A549 (cell line): ENCODE measurements at regions of chr17 and their contacts with region 1.

Region 1: GRCh38 chr17:4074831-4075495 is 67.9 kb downstream of the ZZEF1 start:
- DNase-seq: peak; percentile 56 to 66
- ATAC-seq: peak; percentile 86 to 89
- H3K4me3 ChIP-seq: no peak overlapping the region
- H3K27ac ChIP-seq: no peak overlapping the region
- H3K4me1 ChIP-seq: no peaks in the 10 kb centered on the region
- CTCF ChIP-seq: peak; percentile 69
- EP300 ChIP-seq: no peak
- POLR2A ChIP-seq: no peak
- RAD21 ChIP-seq: peak; percentile 66 to 75

Region 2: DNA sequence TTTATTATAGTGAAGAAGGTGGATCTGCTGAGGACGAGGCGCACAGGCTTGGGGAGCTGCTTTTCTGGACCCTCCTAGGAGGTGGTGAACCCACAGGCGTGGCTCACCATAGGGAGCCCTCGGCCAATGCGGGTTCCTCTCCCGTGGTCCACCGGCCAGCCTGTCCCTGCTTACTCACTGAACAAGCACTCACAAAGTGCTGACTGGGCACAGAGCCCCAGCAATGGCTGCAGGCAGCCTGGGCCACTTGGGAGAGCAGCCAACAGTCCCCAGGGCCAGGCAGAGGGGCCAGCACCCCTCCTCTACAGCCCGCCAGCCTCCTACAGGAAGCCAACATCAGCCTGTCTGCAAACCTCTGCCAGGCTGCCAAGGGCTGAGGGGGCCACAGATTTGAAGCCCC is 209.8 kb before region 1 on chr17:
- CTCF ChIA-PET with region 1: interaction called, 10 read pairs
- POLR2A ChIA-PET with region 1: no interaction called
- DNase-seq: no peak
- ATAC-seq: peak; percentile 42 to 57
- H3K4me3 ChIP-seq: no peak overlapping the region
- H3K27ac ChIP-seq: peak overlapping the region in 1 of 2 experiments; percentile 36; a peak in 3 of 6 replicates
- H3K4me1 ChIP-seq: peaks cover 9% of the 10 kb centered on the region; the same call in 2 of the 3 replicates
- CTCF ChIP-seq: no peak
- EP300 ChIP-seq: no peak
- POLR2A ChIP-seq: no peak
- RAD21 ChIP-seq: no peak

Region 3: GRCh38 chr17:3935140-3935542 is 139.8 kb before region 1 on chr17:
- CTCF ChIA-PET with region 1: interaction called, 36 read pairs
- POLR2A ChIA-PET with region 1: no interaction called
- DNase-seq: peak; percentile 84 to 87
- ATAC-seq: peak; percentile 96 to 98
- H3K4me3 ChIP-seq: no peak overlapping the region
- H3K27ac ChIP-seq: no peak overlapping the region
- H3K4me1 ChIP-seq: no peaks in the 10 kb centered on the region; the same call in 2 of the 3 replicates
- CTCF ChIP-seq: peak; percentile 70
- EP300 ChIP-seq: no peak
- POLR2A ChIP-seq: no peak
- RAD21 ChIP-seq: peak; percentile 79 to 90

Region 4: GRCh38 chr17:4043862-4044261 is 31.1 kb before region 1 on chr17:
- CTCF ChIA-PET with region 1: interaction called, 27 read pairs
- POLR2A ChIA-PET with region 1: no interaction called
- DNase-seq: no peak
- ATAC-seq: no peak
- H3K4me3 ChIP-seq: no peak overlapping the region
- H3K27ac ChIP-seq: no peak overlapping the region
- H3K4me1 ChIP-seq: no peaks in the 10 kb centered on the region
- CTCF ChIP-seq: no peak
- EP300 ChIP-seq: no peak
- POLR2A ChIP-seq: no peak
- RAD21 ChIP-seq: no peak

Region 5: DNA sequence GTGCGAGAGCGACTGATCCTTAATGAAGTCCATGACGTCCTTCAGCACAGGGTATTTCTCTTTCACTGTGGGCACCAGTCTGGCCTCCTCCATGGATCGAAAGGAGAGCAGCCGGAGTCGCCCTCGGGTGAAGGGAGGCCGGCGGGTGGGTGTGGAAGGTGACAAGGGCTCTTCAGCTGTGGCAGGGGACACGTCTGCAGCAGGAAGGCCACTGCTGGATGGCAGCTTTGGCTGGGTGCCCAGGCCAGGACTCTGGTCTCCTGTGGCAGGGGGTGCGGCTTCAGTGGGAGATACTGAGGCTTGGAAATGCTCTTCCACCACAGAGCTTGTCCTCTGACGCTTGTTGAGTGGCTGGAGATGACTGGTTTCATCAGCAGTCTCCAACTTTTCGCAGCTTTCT is 10.6 kb before region 1 on chr17:
- CTCF ChIA-PET with region 1: interaction called, 24 read pairs
- POLR2A ChIA-PET with region 1: no interaction called
- DNase-seq: no peak
- ATAC-seq: no peak
- H3K4me3 ChIP-seq: no peak overlapping the region
- H3K27ac ChIP-seq: no peak overlapping the region
- H3K4me1 ChIP-seq: no peaks in the 10 kb centered on the region
- CTCF ChIP-seq: no peak
- EP300 ChIP-seq: no peak
- POLR2A ChIP-seq: no peak
- RAD21 ChIP-seq: no peak

Region 6: GRCh38 chr17:4086041-4086483 is 11.1 kb after region 1 on chr17:
- CTCF ChIA-PET with region 1: interaction called, 36 read pairs
- POLR2A ChIA-PET with region 1: no interaction called
- DNase-seq: no peak
- ATAC-seq: no peak
- H3K4me3 ChIP-seq: no peak overlapping the region
- H3K27ac ChIP-seq: no peak overlapping the region
- H3K4me1 ChIP-seq: no peaks in the 10 kb centered on the region
- CTCF ChIP-seq: no peak
- EP300 ChIP-seq: no peak
- POLR2A ChIP-seq: no peak
- RAD21 ChIP-seq: no peak

Region 7: DNA sequence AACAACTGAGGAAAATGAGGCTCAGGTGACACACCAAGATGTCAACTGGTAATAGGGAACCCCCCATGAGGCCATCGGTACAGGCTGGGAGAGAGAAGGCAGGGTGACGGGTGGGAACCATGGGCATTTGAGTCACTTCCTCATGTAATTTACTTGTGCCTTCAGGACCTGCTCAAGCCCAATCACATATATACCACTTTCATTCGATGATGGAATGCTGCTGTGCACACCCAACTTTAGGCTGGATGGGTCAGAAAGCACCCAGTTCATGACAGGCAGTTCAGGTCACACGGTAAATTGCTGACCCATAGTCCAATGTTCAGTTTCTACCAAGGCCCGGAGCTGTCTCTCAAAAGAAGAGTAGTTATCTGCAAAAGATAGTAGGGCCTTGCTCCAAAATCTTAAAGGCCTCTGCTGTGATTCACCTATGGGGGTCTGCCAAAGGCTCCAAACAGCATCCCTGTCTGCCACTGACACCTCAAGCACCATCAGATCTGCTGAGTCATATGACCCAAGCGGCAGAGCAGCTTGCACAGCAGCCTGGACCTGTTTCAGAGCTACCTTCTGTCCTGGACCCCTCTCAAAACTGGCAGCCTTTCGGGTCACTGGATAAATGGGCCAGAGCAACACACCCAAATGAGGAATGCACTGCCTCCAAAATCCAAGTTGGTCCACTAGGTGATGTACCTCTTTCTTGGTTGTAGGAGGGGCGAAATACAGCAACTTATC is 43.2 kb after region 1 on chr17:
- CTCF ChIA-PET with region 1: interaction called, 23 read pairs
- POLR2A ChIA-PET with region 1: no interaction called
- DNase-seq: no peak
- ATAC-seq: no peak
- H3K4me3 ChIP-seq: no peak overlapping the region
- H3K27ac ChIP-seq: peak overlapping the region in 1 of 2 experiments; percentile 56; a peak in 2 of 6 replicates
- H3K4me1 ChIP-seq: peaks cover 4% of the 10 kb centered on the region; the same call in 1 of the 3 replicates
- CTCF ChIP-seq: no peak
- EP300 ChIP-seq: no peak
- POLR2A ChIP-seq: no peak
- RAD21 ChIP-seq: no peak